Spleen (tissue), 13 donors: ENCODE measurements at regions of chr2 and their contacts with region 1.

Region 1: DNA sequence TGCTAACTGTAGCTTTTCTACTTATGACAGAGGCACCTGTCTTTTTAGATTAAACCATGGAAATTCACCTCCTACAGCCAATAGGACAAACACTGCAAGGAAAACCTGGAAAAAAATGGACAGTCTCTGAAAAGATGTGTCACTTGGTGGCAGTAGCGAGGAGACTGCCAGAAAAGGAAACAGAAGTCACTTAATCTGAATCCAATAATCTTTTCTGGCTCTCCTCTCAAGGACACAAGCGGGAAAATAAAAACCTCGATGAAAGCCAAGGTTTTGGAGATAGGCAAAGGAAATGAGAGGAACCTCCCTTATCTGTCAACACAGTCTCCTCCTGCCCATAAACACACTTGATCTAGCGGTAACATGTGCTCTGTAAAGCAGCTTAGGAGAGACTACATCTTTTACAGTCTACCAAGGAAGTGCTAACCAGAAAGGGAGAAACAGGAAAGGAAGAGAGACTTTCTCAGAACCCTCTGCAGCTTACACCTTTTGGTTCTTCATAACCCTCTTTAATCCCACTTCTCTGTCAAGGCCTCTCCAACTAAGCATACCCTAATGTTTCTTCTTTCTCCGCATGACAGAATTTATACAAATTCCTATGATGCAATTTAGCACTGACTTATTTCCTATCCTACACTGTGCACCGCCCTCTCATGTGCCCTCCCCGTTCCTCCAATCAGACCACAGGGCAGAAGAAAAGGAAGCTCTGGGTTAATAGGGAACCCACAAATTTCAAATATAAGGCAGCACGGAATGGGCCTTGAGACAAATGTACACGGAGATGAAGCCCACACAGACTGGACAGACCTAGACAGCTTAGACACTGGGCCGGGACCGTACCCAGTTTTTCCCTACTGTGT is 52.8 kb downstream of the CLASP1 start:
- DNase-seq: peak; percentile 79
- H3K4me3 ChIP-seq: peak overlapping the region in 3 of 8 donors; percentile 4 to 47 (median 12)
- H3K27ac ChIP-seq: peak overlapping the region; percentile 49 to 82 (median 79)
- H3K4me1 ChIP-seq: peaks cover 18 to 66% (median 38%) of the 10 kb centered on the region in 6 donors
- H3K27me3 ChIP-seq: no peaks in the 10 kb centered on the region
- CTCF ChIP-seq: peak in 5 of 11 experiments; percentile 21 to 40 (median 25)
- POLR2A ChIP-seq: no peak

Region 2: DNA sequence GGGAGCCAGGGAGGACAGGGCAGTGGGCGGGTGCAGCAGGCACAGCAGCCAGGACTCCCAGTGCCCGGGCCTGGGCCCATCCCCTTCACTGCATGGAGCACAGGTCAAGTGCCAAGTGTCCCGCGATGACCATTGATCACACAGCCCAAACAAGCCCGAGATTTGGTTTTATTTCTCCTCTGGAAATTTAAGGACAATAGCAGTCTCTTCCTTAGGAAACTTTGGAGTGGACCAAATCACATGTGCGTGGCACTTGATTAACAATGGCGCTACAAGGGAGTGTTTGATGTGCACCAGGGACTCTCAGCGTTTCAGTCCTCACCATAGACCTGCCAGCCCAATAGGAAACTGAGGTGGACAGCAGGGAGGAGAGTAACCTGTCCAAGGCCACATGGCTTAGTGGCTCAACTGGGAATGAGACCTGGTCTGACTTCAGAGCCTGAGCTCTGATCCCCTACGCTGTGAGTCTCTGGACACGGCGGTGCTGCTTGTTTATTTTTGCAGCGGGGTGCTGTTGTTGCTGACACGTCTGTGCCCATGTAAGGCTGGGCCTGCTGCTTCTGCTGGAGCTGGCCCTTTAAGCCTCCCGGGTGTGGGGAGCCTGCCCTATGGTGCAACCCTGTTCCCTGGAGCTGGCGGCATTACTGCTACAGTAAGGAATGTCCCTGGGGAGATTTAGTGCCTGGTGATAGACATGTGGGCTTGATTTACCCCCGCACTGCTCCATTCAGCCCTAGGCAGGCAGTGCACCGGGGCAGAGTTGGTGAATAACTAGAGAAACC is 1056.3 kb before region 1 on chr2:
- intact Hi-C with region 1: no loop called
- DNase-seq: no peak
- H3K4me3 ChIP-seq: no peak overlapping the region
- H3K27ac ChIP-seq: peak overlapping the region in 6 of 8 donors; percentile 27 to 61 (median 51)
- H3K4me1 ChIP-seq: peaks cover 0 to 31% (median 2%) of the 10 kb centered on the region in 6 donors
- H3K27me3 ChIP-seq: peaks cover 0 to 26% (median 0%) of the 10 kb centered on the region in 7 donors
- CTCF ChIP-seq: no peak
- POLR2A ChIP-seq: no peak

Region 3: DNA sequence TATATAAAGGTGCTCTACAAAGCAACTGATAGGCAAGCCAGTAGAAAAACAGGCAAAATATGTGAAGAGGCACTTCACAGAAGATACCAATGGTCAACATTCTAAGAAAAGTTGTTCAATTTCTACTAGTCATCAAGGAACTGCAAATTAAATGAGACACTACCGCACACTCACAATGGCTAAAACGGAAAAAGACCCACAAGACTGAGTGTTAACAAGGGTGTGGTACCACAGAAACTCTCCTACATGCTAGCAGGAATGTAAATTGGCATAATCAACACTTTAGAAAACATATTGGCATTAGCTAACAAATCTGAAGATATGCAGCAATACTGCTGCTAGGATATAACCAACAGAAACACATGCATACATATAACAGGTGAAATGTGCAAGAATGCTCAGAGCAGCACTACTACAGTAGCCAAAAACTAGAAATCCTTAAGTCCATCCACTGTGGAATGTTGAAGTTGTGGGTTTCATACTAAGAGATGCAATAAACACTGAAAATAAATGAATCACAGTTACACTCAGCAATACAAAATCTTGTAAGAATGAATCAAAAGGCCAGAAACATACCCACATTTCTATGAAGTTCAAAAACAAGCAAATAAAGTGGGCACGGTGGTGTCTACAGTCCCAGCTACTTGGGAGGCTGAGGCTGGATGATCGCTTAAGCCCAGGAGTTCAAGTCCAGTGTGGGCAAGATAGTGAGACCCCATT is 56.5 kb before region 1 on chr2:
- intact Hi-C with region 1: loop called (anchors 10 kb)
- DNase-seq: no peak
- H3K4me3 ChIP-seq: peak overlapping the region in 1 of 8 donors; percentile 3
- H3K27ac ChIP-seq: peak overlapping the region in 5 of 8 donors; percentile 1 to 69 (median 39)
- H3K4me1 ChIP-seq: peaks cover 3 to 67% (median 27%) of the 10 kb centered on the region in 6 donors
- H3K27me3 ChIP-seq: no peaks in the 10 kb centered on the region
- CTCF ChIP-seq: no peak
- POLR2A ChIP-seq: no peak

Region 4: DNA sequence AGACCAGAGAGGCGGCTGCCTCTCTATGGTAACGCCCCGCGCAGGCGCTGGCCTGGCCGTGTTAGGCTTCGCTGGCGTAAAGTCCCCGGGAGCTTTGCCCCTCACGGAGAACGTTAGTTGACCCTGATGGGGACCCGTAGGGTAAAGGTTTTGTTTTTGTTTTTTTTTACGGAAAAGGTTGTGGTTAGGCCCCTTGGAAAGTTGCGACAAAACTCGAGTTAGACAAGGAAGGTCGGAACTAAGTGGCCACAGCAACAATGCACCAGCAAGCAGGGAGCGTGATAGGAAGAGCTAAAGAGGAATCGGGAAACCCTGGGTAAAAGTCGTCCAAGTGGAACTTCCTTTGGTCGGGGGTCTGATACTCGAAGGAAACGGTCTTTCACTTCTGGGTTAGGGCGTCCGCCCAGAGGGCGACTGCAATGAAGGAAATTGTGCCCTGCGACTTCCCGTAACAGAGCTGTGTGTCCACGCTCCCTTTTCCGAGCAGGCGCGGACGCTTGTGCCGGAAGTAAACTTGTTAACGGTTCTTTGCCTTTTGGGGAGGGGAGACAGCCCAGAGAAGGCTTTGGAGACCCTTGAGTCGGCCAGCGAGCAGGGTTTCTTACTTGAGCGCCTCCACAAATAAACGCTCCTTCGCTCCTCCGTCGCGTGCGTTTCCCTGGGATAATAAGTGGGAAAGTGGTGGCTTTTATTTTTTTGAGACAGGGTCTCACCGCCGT is 53.3 kb after region 1 on chr2:
- intact Hi-C with region 1: loop called (anchors 10 kb)
- DNase-seq: peak; percentile 99
- H3K4me3 ChIP-seq: peak overlapping the region; percentile 49 to 90 (median 78)
- H3K27ac ChIP-seq: peak overlapping the region; percentile 95 to 98 (median 98)
- H3K4me1 ChIP-seq: peaks cover 22 to 75% (median 57%) of the 10 kb centered on the region in 6 donors
- H3K27me3 ChIP-seq: no peaks in the 10 kb centered on the region
- CTCF ChIP-seq: peak in 1 of 11 experiments; percentile 30
- POLR2A ChIP-seq: peak in 1 of 3 donors; percentile 41